ENCODE measurements at regions of chr3 and their contacts with region 1.

Region 1: GRCh38 chr3:71577011-71577410 is 6.5 kb downstream of the FOXP1 start:
- DNase-seq: peak; percentile 18 to 51 (median 39)
- H3K4me3 ChIP-seq: peak overlapping the region in 2 of 3 experiments; percentile 27 to 91
- H3K4me3 Mint-ChIP-seq: peak overlapping the region; percentile 47 to 78
- H3K27ac ChIP-seq: peak overlapping the region in 1 of 2 donors; percentile 92
- H3K27ac Mint-ChIP-seq: peak overlapping the region; percentile 15 to 87 (median 70)
- H3K4me1 ChIP-seq: peaks cover 38 to 51% of the 10 kb centered on the region in 2 donors
- H3K4me1 Mint-ChIP-seq: peaks cover 51% of the 10 kb centered on the region
- H3K27me3 ChIP-seq: no peaks in the 10 kb centered on the region
- H3K27me3 Mint-ChIP-seq: no peaks in the 10 kb centered on the region
- CTCF ChIP-seq: no peak

Region 2: DNA sequence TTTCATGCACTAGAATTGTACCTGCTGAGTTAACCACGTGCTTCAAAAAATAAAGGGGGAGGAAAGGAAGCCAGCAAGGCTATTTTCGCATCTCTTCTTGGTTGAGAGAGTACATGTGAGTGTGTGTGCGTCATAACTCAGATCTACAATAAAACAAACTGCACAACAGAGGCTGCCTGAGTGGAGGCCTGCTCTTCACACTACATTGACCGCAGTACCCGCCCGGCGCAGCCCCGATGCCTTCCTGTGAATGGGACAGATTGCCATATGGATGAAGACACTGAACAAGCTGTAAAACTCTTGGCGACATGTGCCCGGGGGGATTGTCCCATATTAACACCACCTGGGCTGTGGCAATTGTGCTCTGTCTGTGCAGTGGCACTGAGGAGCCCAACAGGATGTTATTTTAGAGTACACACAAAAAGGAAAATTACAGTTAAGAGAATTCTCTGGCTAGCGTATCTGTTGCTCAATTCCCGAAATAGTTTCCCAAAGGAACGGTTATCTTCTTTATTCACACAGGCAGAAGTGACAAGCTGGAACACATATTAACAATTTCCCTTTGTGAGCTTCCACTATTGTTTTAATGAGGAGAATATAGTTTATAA is 545.0 kb before region 1 on chr3:
- intact Hi-C with region 1: no loop called
- DNase-seq: no peak
- H3K4me3 ChIP-seq: no peak overlapping the region
- H3K4me3 Mint-ChIP-seq: no peak overlapping the region
- H3K27ac ChIP-seq: peak overlapping the region in 1 of 2 donors; percentile 36
- H3K27ac Mint-ChIP-seq: peak overlapping the region; percentile 16 to 88 (median 72)
- H3K4me1 ChIP-seq: peaks cover 9 to 12% of the 10 kb centered on the region in 2 donors
- H3K4me1 Mint-ChIP-seq: peaks cover 31% of the 10 kb centered on the region
- H3K27me3 ChIP-seq: no peaks in the 10 kb centered on the region
- H3K27me3 Mint-ChIP-seq: peaks cover 0 to 2% (median 0%) of the 10 kb centered on the region in 3 donors
- CTCF ChIP-seq: no peak

Region 3: GRCh38 chr3:71515636-71516365 is 61.2 kb before region 1 on chr3:
- intact Hi-C with region 1: loop called in 1 of 2 experiments (anchors 2 kb)
- DNase-seq: peak in 2 of 3 donors; percentile 44 to 67
- H3K4me3 ChIP-seq: peak overlapping the region in 2 of 3 experiments; percentile 27 to 48
- H3K4me3 Mint-ChIP-seq: peak overlapping the region; percentile 42 to 77
- H3K27ac ChIP-seq: peak overlapping the region in 1 of 2 donors; percentile 81
- H3K27ac Mint-ChIP-seq: peak overlapping the region in 5 of 7 donors; percentile 86 to 93 (median 91)
- H3K4me1 ChIP-seq: peaks cover 44 to 53% of the 10 kb centered on the region in 2 donors
- H3K4me1 Mint-ChIP-seq: peaks cover 28% of the 10 kb centered on the region
- H3K27me3 ChIP-seq: no peaks in the 10 kb centered on the region
- H3K27me3 Mint-ChIP-seq: no peaks in the 10 kb centered on the region
- CTCF ChIP-seq: no peak